Activated B cell treated with CpG ODN at 0.5 μM for 24 hours (primary cell): ENCODE measurements at regions of chr5 and their contacts with region 1.

Region 1: DNA sequence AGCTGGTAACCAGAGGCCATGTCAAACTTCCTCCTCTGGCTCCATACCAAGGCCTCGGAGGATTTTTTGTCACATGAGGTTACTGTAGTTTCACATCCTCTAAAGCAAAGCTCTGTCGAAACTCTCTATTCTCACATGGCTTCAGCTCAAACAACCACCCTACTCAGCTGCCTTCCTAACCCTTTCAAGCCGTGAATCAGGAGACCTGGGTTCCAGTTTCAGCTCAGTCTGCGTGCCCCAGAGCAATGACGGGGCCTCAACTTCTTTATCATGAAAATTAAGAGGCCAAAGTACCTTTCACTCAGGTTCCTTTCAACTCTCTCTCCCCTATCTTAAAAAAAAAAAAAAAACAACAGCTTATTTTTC is 145.2 kb upstream of the MAP3K1 start:
- DNase-seq: peak; percentile 51
- ATAC-seq: peak; percentile 91
- H3K4me3 Mint-ChIP-seq: peak overlapping the region; percentile 69
- H3K27ac Mint-ChIP-seq: peak overlapping the region; percentile 93
- H3K4me1 Mint-ChIP-seq: peaks cover 83% of the 10 kb centered on the region
- H3K27me3 Mint-ChIP-seq: no peaks in the 10 kb centered on the region
- CTCF ChIP-seq: no peak

Region 2: DNA sequence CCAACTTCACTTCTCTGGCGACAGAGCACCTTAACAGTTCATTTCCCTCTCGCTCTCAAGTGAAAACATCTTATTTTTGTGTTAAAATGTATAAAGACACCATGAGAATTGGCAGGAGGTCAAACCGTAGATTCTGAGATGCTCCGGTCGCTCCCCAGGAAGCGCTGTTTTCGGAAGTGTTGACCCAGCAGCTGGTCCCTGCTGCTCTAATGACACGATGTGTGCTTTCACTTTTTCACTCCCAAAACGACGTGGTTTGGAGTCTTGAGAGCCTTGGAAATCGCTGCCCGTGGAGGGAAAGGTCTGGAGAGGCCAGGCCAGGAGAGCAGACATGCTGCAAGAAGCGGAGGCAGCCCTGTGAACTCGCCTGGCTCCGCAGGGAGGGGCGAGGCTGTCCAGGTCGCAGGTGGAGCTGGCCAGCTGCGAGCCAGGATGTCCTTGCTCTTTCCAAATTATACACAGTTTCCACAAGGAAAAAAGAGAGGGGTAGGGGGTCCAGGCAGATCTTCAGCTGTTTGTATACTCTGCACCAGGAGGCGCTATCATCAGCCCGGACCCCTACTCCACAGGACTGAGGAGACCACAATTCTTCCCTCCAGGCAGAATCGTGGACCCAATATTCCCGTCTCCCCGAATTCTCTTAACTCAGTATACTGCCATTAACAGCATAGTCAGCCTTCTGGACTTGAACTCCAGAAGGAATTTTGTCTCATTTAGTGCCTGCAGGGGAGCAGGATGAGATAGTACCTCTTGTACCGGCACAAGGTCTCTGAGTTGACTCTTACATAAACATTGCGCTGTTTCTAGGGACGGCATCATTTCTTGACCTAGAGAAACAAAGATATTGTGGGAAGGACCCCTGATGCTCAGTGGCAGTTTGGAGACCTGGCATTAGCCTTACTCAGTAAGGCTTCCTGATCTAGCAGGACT is 188.4 kb before region 1 on chr5:
- CTCF ChIA-PET with region 1: interaction called, 9 read pairs
- POLR2A ChIA-PET with region 1: interaction called, 26 read pairs
- intact Hi-C with region 1: loop called (anchors 1 kb)
- DNase-seq: peak; percentile 41
- ATAC-seq: peak; percentile 14
- H3K4me3 Mint-ChIP-seq: peak overlapping the region; percentile 88
- H3K27ac Mint-ChIP-seq: peak overlapping the region; percentile 92
- H3K4me1 Mint-ChIP-seq: peaks cover 45% of the 10 kb centered on the region
- H3K27me3 Mint-ChIP-seq: no peaks in the 10 kb centered on the region
- CTCF ChIP-seq: no peak

Region 3: DNA sequence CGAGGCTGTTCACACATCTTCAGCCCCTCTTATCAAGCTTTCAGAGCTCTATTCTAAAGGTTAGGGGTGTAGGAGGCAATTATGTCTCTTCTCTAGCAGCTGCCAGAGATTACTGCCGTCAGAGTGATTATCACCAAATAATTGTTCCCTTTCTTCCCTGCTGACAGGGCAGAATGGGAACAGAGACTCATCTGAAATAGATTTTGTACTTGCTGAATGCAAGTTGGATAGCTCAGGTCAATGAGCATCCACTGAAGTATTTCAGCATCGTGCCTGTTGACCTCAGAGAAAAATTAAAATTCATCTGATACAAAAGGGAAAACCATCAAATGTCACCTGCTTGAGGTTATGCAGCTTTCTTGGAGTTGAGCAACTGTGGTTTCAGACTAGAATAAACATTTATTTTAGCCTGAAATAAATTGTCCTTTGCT is 68.4 kb before region 1 on chr5:
- CTCF ChIA-PET with region 1: no interaction called
- POLR2A ChIA-PET with region 1: no interaction called
- intact Hi-C with region 1: no loop called
- DNase-seq: no peak
- ATAC-seq: no peak
- H3K4me3 Mint-ChIP-seq: no peak overlapping the region
- H3K27ac Mint-ChIP-seq: no peak overlapping the region
- H3K4me1 Mint-ChIP-seq: peaks cover 9% of the 10 kb centered on the region
- H3K27me3 Mint-ChIP-seq: no peaks in the 10 kb centered on the region
- CTCF ChIP-seq: no peak

Region 4: DNA sequence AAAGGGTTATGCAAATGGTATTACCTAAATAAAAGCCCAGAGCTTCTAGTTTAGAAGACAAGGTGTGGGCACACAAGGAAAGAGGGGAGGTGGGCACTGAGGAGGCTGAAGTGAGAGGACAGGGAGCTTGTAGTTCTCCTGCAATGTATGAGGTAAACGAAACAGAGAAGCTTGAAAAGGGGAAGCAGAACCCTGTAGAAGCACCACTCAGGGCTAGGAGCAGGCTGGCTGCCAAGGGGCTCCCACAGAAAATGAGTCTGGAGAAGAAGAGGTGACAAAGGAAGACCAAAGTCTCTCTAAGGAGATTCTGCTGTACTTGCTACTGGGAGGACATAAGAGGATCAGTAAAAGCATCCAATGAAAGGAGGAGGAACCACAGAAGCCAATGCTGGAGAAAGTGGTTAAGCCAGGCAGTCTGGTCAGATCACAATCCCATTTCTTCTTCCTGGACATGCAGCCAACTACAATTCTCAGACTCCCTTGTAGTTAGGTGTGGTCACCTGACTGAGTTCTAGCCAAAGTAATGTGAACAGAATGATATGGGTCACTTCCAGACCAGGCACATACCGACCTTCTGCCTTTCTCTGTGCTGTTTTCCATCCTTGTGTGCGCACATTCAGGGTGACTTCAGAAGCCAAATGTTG is 29.2 kb before region 1 on chr5:
- CTCF ChIA-PET with region 1: no interaction called
- POLR2A ChIA-PET with region 1: interaction called, 5 read pairs
- intact Hi-C with region 1: loop called (anchors 2 kb)
- DNase-seq: no peak
- ATAC-seq: peak; percentile 97
- H3K4me3 Mint-ChIP-seq: peak overlapping the region; percentile 9
- H3K27ac Mint-ChIP-seq: peak overlapping the region; percentile 26
- H3K4me1 Mint-ChIP-seq: peaks cover 28% of the 10 kb centered on the region
- H3K27me3 Mint-ChIP-seq: no peaks in the 10 kb centered on the region
- CTCF ChIP-seq: no peak

Region 5: DNA sequence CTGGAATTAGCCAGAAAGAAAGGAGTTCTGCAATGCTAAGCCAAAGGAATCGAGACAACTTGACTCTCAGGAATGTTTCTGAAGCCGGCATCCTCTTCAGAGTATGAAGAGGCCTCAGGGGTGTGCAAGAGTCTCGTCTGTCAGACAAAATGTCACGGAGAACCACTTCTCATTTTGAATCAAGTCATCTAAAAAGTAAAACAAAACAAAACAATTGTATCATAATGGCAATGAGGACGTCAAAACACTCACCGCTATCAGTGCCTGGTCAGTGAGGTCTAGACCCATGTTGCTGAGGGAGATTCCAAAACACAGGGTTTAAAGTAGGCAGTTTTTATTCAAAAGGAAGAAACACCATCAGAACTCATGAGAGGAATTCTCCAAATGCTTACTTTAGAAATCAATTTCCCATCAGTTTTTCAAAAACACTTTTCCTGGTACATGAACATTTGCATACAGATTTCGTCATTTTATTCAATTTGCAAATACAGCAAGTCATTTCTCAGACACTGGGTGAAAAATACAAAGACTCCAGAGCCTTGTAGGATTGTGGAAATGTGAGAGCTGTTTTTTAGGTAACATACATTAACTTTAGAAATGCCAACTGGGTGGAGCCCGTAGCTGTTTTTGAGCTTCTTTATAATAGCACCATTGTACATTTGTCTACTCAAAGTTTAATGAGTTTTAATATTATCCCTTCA is 55.8 kb after region 1 on chr5:
- CTCF ChIA-PET with region 1: no interaction called
- POLR2A ChIA-PET with region 1: no interaction called
- intact Hi-C with region 1: loop called (anchors 1 kb)
- DNase-seq: no peak
- ATAC-seq: no peak
- H3K4me3 Mint-ChIP-seq: peak overlapping the region; percentile 19
- H3K27ac Mint-ChIP-seq: peak overlapping the region; percentile 71
- H3K4me1 Mint-ChIP-seq: peaks cover 32% of the 10 kb centered on the region
- H3K27me3 Mint-ChIP-seq: no peaks in the 10 kb centered on the region
- CTCF ChIP-seq: no peak

Region 6: DNA sequence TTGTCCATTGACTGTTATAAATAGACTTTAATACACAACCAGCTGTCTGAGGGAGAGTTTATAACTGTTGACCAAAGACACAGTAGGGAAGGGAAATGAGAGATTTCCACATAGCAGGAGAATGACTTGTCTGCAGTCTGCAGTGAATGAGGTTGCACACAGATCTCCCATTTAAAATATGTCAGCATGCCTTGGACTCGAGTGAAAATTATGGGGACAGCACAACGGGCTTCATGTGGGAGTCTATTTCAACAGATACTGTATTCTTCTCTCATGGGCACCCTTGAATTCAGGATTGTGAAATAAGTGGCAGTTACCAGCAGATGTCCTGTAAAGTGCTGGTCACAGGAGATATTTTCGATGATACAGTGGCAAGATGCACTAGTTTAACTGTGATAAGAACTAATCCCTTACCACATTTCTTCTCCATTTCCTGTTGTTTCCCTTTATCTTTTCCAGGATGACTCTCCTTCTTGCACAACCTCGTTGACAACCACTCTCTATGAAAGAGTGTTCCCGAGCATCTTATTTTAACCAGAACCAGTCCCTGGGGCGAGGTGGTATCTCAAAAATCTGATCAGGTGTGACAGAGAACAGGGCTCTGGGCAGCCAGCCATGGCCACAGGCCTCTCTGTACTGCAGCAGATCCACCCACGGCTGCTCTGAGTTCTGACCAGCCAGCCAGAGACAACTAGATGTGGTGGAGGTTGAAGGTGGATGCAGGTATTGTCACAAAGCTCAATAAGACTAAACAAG is 93.8 kb after region 1 on chr5:
- CTCF ChIA-PET with region 1: no interaction called
- POLR2A ChIA-PET with region 1: interaction called, 6 read pairs
- intact Hi-C with region 1: loop called (anchors 1 kb)
- DNase-seq: peak; percentile 35
- ATAC-seq: peak; percentile 91
- H3K4me3 Mint-ChIP-seq: peak overlapping the region; percentile 38
- H3K27ac Mint-ChIP-seq: peak overlapping the region; percentile 78
- H3K4me1 Mint-ChIP-seq: peaks cover 78% of the 10 kb centered on the region
- H3K27me3 Mint-ChIP-seq: no peaks in the 10 kb centered on the region
- CTCF ChIP-seq: no peak